ENCODE measurements at regions of chr9 and their contacts with region 1.

Region 1: DNA sequence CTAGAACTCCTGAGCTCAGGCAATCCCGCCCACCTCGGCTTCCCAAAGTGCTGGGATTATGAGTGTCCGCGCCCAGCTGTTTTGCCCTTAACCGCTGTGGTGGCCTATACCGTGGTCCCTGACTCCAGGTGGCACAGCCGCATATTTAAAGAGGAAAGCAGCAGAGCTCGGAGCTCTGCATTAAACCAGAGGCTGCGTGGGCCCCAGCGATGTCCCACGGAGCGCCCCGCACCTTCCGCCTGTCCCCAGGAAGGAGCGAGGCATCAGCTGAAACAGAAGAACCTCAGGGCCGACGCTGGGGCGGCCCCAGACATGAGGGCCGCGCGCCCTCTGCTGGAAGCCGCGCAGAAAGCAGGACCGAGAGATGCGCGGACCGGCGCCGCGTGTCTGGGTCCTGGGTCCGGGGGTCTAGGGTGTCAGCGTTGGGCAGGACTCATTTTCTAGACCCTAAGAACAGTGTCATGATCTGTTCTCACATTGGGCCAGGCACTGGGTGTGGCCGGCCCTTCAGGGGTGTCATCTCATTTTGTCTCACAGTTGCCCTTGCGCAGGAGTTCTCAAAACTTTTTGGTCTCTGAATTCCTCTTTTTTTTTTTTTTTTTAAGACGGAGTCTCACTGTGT is 37.7 kb downstream of the LAMC3 start:
- DNase-seq: peak; percentile 70 to 85 (median 82)
- H3K4me3 ChIP-seq: peak overlapping the region in 3 of 7 experiments; percentile 43 to 54 (median 52)
- H3K27ac ChIP-seq: no peak overlapping the region
- H3K4me1 ChIP-seq: peaks cover 2 to 18% (median 16%) of the 10 kb centered on the region in 4 experiments
- H3K27me3 ChIP-seq: no peaks in the 10 kb centered on the region

Region 2: DNA sequence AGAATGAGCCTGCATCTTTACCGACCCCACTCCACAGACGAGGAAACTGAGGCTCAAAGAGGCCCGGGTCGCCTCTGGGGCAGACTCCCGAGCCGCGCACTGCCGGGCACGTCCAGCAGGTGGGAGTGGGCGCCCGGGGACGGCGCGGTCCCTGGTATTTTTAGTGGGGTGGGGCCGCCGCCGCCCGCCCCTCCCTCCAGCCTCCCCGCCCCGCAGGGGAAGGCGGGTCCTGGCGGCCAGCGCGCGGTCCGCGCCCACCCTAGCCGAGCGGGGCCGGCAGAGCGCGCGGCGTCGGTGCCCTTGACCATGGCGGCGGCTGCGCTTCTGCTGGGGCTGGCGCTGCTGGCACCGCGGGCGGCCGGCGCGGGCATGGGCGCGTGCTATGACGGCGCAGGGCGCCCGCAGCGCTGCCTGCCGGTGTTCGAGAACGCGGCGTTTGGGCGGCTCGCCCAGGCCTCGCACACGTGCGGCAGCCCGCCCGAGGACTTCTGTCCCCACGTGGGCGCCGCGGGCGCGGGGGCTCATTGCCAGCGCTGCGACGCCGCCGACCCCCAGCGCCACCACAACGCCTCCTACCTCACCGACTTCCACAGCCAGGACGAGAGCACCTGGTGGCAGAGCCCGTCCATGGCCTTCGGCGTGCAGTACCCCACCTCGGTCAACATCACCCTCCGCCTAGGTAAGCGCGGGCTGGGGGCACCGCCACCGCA is 37.6 kb before region 1 on chr9 and contains the start of gene LAMC3:
- CTCF ChIA-PET with region 1: interaction called, 19 read pairs
- POLR2A ChIA-PET with region 1: no interaction called
- DNase-seq: peak; percentile 52 to 72 (median 60)
- H3K4me3 ChIP-seq: peak within 1 kb of the TSS in 5 of 7 experiments; percentile 5 to 59 (median 26)
- H3K27ac ChIP-seq: no peak within 1 kb of the TSS
- H3K4me1 ChIP-seq: peaks cover 0 to 5% (median 3%) of the 10 kb centered on the region in 4 experiments
- H3K27me3 ChIP-seq: peaks cover 0 to 47% (median 11%) of the 10 kb centered on the region in 5 experiments

Region 3: GRCh38 chr9:131018621-131019020 is 28.1 kb before region 1 on chr9:
- CTCF ChIA-PET with region 1: interaction called, 13 read pairs
- POLR2A ChIA-PET with region 1: interaction called, 4 read pairs
- DNase-seq: peak in 1 of 3 donors; percentile 18
- H3K4me3 ChIP-seq: no peak overlapping the region
- H3K27ac ChIP-seq: no peak overlapping the region
- H3K4me1 ChIP-seq: no peaks in the 10 kb centered on the region
- H3K27me3 ChIP-seq: peaks cover 0 to 12% (median 4%) of the 10 kb centered on the region in 5 experiments

Region 4: GRCh38 chr9:131491001-131491710 is 444.5 kb after region 1 on chr9:
- CTCF ChIA-PET with region 1: no interaction called
- POLR2A ChIA-PET with region 1: no interaction called
- DNase-seq: no peak
- H3K4me3 ChIP-seq: no peak overlapping the region
- H3K27ac ChIP-seq: no peak overlapping the region
- H3K4me1 ChIP-seq: no peaks in the 10 kb centered on the region
- H3K27me3 ChIP-seq: no peaks in the 10 kb centered on the region